ENCODE measurements at regions of chr10 and their contacts with region 1.

Region 1: DNA sequence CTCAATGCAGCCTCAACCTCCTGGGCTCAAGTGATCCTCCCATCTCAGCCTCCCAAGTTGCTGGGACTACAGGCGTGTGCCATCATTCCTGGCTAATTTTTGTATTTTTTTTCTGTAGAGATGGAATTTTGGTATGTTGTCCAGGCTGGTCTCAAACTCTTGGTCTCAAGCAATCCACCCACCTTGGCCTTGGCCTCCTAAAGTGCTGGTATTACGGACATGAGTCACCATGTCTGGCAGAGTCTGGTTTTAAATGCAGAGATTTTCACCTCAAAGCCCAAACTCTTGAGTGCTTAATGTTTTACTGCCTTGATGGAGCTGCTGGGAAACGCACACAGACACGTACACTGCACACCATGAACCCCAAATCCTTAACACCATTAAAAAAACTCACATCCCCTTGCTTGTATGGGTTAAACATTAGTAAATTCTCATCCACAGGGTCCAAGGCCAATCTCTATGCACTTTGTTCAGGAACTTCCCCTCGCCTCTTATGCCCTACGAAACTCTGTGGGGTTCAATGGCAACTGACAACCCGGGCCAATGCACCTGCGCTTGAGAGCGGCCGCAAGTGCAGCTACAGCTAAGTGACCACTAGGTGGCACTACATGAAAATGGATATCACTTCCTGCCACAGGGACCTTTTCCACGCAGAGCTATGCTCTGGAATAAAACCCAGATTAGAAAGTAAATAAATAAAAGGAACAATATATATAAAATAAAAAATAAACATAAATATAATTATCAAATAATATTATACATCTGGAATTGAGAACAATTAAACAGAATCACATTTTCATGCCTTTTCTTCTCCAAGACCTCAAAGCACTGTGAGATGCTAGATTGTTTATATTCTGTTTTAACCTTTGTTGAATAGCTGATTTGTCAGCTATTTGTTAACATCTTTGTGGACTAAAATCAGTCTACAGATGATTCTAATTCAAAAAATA is 66.9 kb upstream of the AFAP1L2 start:
- DNase-seq: peak; percentile 53 to 74
- ATAC-seq: peak; percentile 80

Region 2: GRCh38 chr10:114002422-114002821 is 468.8 kb before region 1 on chr10:
- intact Hi-C with region 1: no loop called
- DNase-seq: no peak
- ATAC-seq: no peak

Region 3: DNA sequence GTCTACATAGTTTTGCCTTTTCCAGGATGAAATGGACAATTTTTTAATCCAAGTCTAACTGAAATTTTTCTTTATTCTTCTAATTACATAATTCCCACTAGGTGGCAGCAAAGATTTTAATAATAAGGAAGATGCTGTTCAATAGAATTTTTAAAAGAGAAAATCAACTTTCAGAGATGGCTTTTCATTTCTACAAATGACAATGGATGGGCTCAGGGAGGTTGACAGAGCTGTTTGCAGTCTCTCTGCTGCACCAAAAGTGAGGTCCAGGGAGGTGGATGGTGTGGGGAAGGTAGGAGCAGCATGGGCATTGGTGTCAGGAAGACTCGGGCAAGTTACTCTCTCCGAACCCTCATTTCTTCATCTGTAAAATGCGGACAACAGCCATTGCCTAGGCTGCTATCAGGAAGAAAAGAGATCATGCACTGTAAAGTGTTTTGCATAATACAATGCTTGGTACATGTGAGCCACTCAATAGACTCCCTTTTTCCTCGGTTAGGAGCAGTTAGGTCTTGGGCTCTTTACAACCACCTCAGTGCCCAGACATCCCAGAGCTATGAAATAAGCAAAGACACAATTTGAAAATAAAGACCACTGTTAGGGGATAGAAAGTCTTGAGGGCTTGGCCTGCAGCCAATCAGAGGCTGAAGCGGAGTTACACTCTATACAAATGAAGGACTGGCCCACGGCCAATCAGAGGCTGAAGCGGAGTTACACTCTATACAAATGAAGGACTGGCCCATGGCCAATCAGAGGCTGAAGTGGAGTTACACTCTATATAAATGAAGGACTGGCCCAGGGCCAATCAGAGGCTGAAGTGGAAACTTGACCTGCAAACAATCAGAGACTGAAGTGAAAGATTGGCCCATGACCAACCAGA is 79.8 kb after region 1 on chr10:
- intact Hi-C with region 1: loop called in 1 of 2 experiments (anchors 1 kb)
- DNase-seq: peak; percentile 82 to 83
- ATAC-seq: peak; percentile 79

Region 4: GRCh38 chr10:114703377-114704107 is 232.3 kb after region 1 on chr10:
- intact Hi-C with region 1: loop called in 1 of 2 experiments (anchors 10 kb)
- DNase-seq: no peak
- ATAC-seq: peak; percentile 64

Region 5: GRCh38 chr10:114779803-114780609 is 308.8 kb after region 1 on chr10:
- intact Hi-C with region 1: loop called in 1 of 2 experiments (anchors 5 kb)
- DNase-seq: no peak
- ATAC-seq: peak; percentile 95

Measured in left colon (tissue), 2 donors.